ENCODE measurements at regions of chr5 and their contacts with region 1.

Region 1: DNA sequence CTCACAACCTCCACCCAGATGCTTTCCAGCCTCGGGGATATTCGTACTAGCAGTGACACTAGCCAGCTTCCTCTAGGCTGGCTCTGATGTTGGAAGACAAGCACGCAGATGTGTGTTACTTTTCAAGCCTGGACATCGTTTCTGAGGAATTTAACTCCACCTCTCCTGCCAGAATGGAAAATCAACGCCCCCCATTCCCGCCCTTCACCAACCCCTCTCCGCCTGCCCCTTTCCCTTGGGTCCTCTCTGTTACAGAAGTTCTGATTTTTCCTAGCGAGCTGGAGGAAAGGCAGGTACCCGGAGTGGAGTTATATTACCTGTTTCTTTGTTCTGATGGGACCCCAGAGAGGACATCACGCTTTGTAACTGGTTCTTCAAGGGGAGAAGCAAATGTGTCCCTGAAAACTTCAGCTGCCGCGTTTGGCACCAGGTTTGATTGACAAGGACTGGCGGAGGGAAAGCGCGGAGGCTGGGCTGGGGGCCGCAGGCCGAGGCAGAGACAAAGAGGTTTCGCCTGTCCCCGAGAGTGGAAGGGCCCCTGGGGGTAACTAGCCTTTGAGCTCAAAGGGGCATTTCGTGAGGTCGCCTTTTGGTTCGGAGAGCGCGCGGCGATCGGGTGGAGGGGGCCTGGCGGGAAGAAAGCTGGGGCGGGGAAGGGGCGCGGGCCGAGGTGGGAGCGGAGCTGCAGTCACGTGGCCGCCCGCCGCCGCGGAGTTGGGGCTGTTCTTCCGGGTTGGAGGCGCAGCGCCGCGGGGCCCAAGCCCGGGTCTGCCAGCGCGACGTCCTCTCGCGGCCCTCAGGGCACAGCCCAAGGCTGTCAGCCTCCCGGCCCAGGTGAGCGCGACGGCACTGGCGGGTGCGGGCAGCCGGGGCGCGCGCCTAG is at the start of gene NNT:
- DNase-seq: peak; percentile 76
- H3K4me3 Mint-ChIP-seq: peak within 1 kb of the TSS; percentile 91
- H3K27ac Mint-ChIP-seq: peak within 1 kb of the TSS; percentile 91
- H3K4me1 Mint-ChIP-seq: peaks cover 34% of the 10 kb centered on the region
- H3K27me3 Mint-ChIP-seq: no peaks in the 10 kb centered on the region
- total RNA-seq, gene NNT: 43.6 and 47.5 TPM in 2 replicates

Region 2: GRCh38 chr5:43530648-43531047 is 72.1 kb before region 1 on chr5:
- intact Hi-C with region 1: no loop called
- DNase-seq: no peak
- H3K4me3 Mint-ChIP-seq: no peak overlapping the region
- H3K27ac Mint-ChIP-seq: no peak overlapping the region
- H3K4me1 Mint-ChIP-seq: peaks cover 23% of the 10 kb centered on the region
- H3K27me3 Mint-ChIP-seq: no peaks in the 10 kb centered on the region

Region 3: DNA sequence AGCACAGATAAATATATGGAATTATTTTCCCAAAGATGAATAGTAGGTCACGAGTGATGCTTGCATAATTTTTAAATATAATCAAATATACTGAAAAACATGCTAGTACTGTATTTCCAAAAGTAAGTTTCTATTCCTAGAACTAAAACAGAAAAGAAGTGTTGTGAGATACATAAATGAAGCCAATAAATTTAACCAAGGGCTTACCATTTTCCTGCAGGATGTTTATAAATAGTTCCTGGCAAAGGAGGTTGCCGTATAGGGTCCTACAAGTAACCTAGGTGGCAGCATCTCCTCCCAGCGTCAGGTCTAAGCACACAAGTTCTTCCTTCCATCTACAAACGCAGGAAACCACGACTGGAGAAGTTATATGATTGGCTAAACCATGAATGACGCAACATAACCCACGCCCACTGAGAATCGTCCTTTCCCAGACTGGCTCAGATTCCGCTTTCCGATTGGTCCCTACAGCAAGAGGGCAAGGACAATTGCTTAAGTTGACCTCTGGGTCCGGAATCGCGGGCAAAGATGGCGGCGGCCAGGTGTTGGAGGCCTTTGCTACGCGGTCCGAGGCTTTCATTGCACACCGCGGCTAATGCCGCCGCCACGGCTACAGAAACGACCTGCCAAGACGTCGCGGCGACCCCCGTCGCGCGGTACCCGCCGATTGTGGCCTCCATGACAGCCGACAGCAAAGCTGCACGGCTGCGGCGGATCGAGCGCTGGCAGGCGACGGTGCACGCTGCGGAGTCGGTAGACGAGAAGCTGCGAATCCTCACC is 1205.9 kb after region 1 on chr5 and contains the start of gene MRPS30:
- intact Hi-C with region 1: loop called (anchors 2 kb)
- DNase-seq: peak; percentile 91
- H3K4me3 Mint-ChIP-seq: peak within 1 kb of the TSS; percentile 99
- H3K27ac Mint-ChIP-seq: peak within 1 kb of the TSS; percentile 98
- H3K4me1 Mint-ChIP-seq: peaks cover 42% of the 10 kb centered on the region
- H3K27me3 Mint-ChIP-seq: no peaks in the 10 kb centered on the region
- total RNA-seq, gene MRPS30: 62.9 and 63.5 TPM in 2 replicates

Measured in activated T-helper 1 cell treated with anti-CD3 and anti-CD28 coated beads, Interleukin-12 subunit alpha, Interleukin-12 subunit beta, Interleukin-2, Interleukin-4 antibody, amounts not matched to agents 30 ng/mL and 10 ng/mL and 1 ng/mL, durations not matched to agents 14 hours and 24 hours and 36 hours (primary cell).